Esophagus muscularis mucosa (tissue), 4 donors: ENCODE measurements at regions of chr9 and their contacts with region 1.

Region 1: DNA sequence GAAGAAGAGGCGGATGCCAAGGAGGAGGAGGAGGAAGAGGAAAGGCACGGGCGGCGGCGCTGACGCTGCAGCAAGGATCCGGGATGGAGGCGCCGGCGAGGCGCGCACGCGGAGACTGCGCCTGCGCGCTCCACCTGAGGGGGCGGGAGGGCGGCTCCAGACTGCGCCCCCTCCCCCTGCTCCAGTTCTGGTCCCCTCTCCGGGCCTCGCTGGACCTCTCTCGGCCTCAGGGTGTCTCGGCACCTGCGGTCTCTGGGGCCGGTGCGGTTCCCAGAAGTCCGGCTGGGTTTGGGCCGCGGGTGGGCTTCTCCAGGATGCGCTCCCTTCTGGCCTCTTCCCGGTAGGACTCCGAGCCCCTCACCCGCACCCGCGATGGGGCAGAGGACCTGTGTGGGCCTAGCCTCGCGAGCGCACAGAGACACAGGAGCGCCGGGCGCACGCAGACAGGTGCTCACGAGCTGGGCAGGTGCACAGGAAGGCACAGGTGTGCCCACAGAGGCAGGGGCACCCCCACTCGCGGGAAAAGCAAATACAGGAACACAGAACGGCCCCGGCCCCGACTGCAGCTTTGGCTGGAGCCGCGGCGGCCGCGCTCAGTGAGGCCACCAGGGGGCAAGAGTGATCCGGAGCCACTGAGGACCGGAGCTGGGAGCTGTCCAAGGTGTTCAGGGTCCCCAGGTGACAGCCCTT is at the start of gene NPDC1:
- DNase-seq: no peak
- H3K4me3 ChIP-seq: peak within 1 kb of the TSS; percentile 66 to 85 (median 71)
- H3K27ac ChIP-seq: peak within 1 kb of the TSS; percentile 58 to 81 (median 75)
- H3K4me1 ChIP-seq: peaks cover 36 to 57% (median 56%) of the 10 kb centered on the region in 4 donors
- H3K27me3 ChIP-seq: peaks cover 0 to 47% (median 24%) of the 10 kb centered on the region in 4 donors
- CTCF ChIP-seq: peak; percentile 76 to 85 (median 80)
- EP300 ChIP-seq: no peak
- POLR2A ChIP-seq: no peak
- total RNA-seq, gene NPDC1: 45.3 to 119 (median 91.5) TPM

Region 2: GRCh38 chr9:136488247-136489214 is 557.7 kb before region 1 on chr9:
- intact Hi-C with region 1: no loop called
- DNase-seq: no peak
- H3K4me3 ChIP-seq: no peak overlapping the region
- H3K27ac ChIP-seq: no peak overlapping the region
- H3K4me1 ChIP-seq: peaks cover 25 to 38% (median 28%) of the 10 kb centered on the region in 4 donors
- H3K27me3 ChIP-seq: no peaks in the 10 kb centered on the region
- CTCF ChIP-seq: peak in 2 of 3 experiments; percentile 98 to 99
- EP300 ChIP-seq: no peak
- POLR2A ChIP-seq: no peak

Region 3: DNA sequence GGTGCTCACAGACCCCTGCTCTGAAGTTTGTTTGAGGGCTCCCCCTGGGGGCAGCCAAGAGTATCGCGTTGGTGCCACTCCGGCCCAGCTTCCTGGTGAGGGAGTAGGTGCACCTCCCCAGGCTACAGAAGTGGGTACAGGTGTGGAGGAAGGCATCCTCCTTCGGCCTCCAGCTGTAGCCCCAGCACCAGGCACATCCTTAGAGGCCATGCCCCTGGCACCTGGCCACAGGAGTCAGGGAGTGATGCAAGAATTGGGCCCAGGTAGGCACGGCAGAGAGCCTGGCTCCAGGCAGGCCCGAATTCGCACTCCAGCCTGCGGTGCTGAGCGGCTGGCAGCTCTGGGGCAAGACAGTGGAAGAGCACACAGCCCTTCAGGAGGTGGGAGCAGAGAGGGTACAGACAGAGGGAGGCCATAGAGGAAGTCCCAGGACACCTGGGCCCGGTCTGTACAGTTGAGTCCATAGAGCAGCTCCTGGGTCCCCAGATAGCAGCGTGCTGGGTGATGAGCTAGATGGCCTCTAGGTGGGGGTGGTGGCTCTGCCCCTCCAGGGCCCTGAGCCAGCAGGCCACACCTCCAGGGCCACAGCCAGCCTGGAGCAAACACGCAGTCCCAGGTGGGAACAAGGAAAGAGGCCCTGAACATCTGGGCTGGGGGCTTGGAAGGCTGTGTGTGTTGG is 21.8 kb after region 1 on chr9:
- intact Hi-C with region 1: loop called (anchors 2 kb)
- DNase-seq: no peak
- H3K4me3 ChIP-seq: no peak overlapping the region
- H3K27ac ChIP-seq: no peak overlapping the region
- H3K4me1 ChIP-seq: peaks cover 18 to 35% (median 33%) of the 10 kb centered on the region in 4 donors
- H3K27me3 ChIP-seq: peaks cover 0 to 40% (median 15%) of the 10 kb centered on the region in 4 donors
- CTCF ChIP-seq: peak; percentile 71 to 83 (median 75)
- EP300 ChIP-seq: no peak
- POLR2A ChIP-seq: no peak

Region 4: GRCh38 chr9:137236238-137236935 is 190.1 kb after region 1 on chr9:
- intact Hi-C with region 1: no loop called
- DNase-seq: peak; percentile 95
- H3K4me3 ChIP-seq: peak overlapping the region; percentile 29 to 43 (median 37)
- H3K27ac ChIP-seq: peak overlapping the region in 1 of 4 donors; percentile 1
- H3K4me1 ChIP-seq: peaks cover 40 to 60% (median 48%) of the 10 kb centered on the region in 4 donors
- H3K27me3 ChIP-seq: peaks cover 0 to 39% (median 15%) of the 10 kb centered on the region in 4 donors
- CTCF ChIP-seq: peak in 2 of 3 experiments; percentile 97 to 99
- EP300 ChIP-seq: no peak
- POLR2A ChIP-seq: no peak